Right ventricle myocardium superior (tissue), 1 donor: ENCODE measurements at regions of chr12 and their contacts with region 1.

Region 1: DNA sequence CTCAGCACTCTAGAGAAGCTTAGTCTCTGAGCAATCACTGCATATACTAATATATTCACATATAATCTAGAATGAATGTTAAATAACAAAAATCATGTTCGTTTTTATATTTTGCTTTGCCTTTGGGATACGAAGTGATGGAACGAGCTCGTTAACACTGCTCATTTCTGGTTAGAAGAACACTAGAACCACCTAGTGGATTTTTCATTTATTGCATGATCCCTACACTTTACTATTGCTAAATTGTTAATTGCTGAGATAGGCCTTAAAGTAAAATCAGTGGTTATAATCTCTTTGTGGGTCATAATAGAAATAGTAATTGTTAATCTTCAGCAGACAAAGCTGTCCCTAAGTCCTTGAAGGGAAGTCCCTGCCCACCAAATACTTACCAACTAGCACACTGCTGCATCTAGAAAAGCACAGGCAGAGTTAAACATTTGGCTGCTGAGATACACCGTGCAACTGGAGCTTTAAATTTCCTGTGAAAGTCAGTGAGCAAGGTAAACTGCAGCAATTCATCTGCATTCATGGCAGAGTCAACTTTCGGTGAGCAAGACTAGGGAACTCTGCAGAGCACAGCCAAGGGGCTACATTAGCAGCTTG is 353.7 kb downstream of the APAF1 start:
- DNase-seq: no peak
- ATAC-seq: peak; percentile 79

Region 2: DNA sequence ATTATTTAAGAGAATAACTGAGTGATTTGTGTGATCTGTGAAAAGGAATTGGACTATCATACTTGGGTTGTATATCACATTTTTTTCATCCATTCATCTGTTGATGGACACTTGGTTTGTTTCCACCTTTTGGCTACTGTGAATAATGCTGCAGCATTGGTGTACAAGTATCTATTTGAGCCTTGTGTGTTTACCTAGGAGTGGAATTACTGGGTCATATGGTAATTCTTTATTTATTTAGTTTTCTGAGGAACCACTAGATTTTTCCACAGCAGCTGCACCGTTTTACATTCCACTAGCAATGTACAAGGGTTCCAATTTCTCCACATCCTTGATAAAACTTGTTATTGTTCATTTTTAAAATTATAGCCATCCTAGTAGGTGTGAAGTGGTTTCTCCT is 297.6 kb before region 1 on chr12:
- intact Hi-C with region 1: loop called (anchors 10 kb)
- DNase-seq: no peak
- ATAC-seq: no peak